ENCODE measurements at regions of chr20 and their contacts with region 1.

Region 1: GRCh38 chr20:45229264-45230056 is 8.3 kb downstream of the SEMG2 start:
- DNase-seq: peak; percentile 14
- H3K4me3 Mint-ChIP-seq: no peak overlapping the region
- H3K27ac Mint-ChIP-seq: no peak overlapping the region
- H3K4me1 Mint-ChIP-seq: no peaks in the 10 kb centered on the region
- H3K27me3 Mint-ChIP-seq: peaks cover 31% of the 10 kb centered on the region

Region 2: DNA sequence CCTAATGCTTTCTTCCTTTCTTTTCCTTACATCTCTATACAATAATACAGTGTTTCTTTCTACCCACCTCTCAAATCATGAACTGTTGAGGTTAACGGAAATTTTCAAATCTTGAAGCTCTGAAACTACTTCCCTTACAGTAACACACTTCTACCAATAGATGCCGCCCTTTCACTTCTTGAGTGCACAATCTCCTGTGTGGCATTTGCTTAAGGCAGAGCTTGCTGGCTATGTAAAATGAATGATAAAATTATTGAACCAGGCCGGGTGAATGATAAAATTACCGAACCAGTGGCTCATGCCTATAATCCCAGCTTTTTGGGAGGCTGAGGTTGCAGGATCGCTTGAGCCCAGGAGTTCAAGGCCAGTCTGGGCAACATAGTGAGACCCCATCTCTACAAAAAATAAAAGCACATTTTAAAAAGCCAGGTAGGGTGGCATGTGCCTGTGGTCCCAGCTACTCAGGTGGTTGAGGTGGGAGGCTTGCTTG is 185.3 kb before region 1 on chr20:
- intact Hi-C with region 1: loop called (anchors 1 kb)
- DNase-seq: peak; percentile 21
- H3K4me3 Mint-ChIP-seq: no peak overlapping the region
- H3K27ac Mint-ChIP-seq: peak overlapping the region; percentile 58
- H3K4me1 Mint-ChIP-seq: peaks cover 49% of the 10 kb centered on the region
- H3K27me3 Mint-ChIP-seq: no peaks in the 10 kb centered on the region

Region 3: DNA sequence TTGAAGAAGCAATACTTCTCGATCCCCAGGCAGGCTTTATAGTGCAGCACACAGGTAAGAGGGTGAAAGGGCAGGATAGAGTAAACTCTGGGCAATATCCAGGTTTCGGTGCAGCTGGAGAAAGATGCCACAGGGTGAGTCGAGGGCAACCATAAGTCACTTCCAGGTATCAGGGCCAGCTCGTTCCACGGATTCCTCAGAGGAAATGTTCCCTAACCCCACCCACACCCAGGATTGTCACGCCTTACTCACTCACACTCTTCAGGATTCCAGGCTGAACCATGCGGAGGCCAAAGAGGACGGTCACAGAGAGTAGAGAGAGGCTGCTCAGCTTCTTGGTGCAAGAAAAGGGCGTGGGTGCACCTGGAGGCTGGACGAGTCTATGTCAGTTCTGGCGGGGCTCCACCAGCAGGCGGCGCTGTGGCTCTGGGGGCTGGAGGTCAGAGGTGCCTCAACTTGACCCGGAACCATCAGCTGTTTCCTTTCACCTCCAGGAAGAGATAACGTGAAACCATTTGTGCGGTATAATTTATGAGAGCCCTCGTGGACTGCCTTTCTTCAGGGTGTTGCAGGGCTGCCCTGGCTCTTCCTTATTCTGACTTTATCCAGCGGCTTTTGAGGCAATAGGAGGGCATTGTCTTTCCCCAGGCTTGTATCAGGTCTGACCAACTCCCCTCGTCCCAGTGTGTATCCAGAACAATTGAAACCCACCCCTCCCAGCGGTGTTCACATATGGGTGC is 90.7 kb before region 1 on chr20:
- intact Hi-C with region 1: loop called (anchors 10 kb)
- DNase-seq: peak; percentile 46
- H3K4me3 Mint-ChIP-seq: no peak overlapping the region
- H3K27ac Mint-ChIP-seq: no peak overlapping the region
- H3K4me1 Mint-ChIP-seq: no peaks in the 10 kb centered on the region
- H3K27me3 Mint-ChIP-seq: peaks cover 10% of the 10 kb centered on the region

Region 4: GRCh38 chr20:45174434-45175364 is 54.8 kb before region 1 on chr20 and contains the start of gene PI3:
- intact Hi-C with region 1: no loop called
- DNase-seq: no peak
- H3K4me3 Mint-ChIP-seq: no peak within 1 kb of the TSS
- H3K27ac Mint-ChIP-seq: no peak within 1 kb of the TSS
- H3K4me1 Mint-ChIP-seq: peaks cover 3% of the 10 kb centered on the region
- H3K27me3 Mint-ChIP-seq: peaks cover 20% of the 10 kb centered on the region
- total RNA-seq, gene PI3: not detected in 2 replicates

Region 5: GRCh38 chr20:46699651-46700359 is 1470.3 kb after region 1 on chr20:
- intact Hi-C with region 1: no loop called
- DNase-seq: no peak
- H3K4me3 Mint-ChIP-seq: no peak overlapping the region
- H3K27ac Mint-ChIP-seq: no peak overlapping the region
- H3K4me1 Mint-ChIP-seq: peaks cover 8% of the 10 kb centered on the region
- H3K27me3 Mint-ChIP-seq: peaks cover 19% of the 10 kb centered on the region